ENCODE measurements at regions of chr4 and their contacts with region 1.

Region 1: GRCh38 chr4:173013232-173013930 is 155.2 kb upstream of the GALNT7 start:
- DNase-seq: peak; percentile 58
- H3K4me3 ChIP-seq: no peak overlapping the region; a peak in 1 of 4 replicates
- H3K27ac ChIP-seq: peak overlapping the region in 1 of 2 experiments; percentile 34; a peak in 2 of 4 replicates
- H3K4me1 ChIP-seq: peaks cover 0 to 16% of the 10 kb centered on the region in 2 experiments; a peak in 1 of 4 replicates
- H3K27me3 ChIP-seq: no peaks in the 10 kb centered on the region
- CTCF ChIP-seq: peak; percentile 77
- EP300 ChIP-seq: no peak
- RAD21 ChIP-seq: peak; percentile 81

Region 2: DNA sequence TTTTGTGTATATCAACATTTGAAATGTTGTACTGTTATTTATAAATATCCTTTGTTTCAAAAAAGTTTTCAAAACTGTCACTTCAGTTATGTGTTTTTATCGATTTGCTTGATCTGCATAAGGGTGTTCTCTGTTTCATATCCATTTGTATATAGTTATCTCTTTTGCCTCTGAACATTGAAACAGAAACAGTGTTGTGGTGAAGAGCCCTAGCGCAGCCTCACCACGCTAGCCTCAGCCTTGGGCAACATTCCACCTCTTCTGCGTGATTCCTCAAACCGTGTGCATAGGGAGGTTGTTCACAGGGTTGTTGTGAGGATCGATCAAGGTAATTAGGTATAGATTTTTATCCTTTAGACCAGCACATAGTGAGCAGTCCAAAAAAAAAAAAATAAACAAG is 131.7 kb before region 1 on chr4:
- CTCF ChIA-PET with region 1: no interaction called
- POLR2A ChIA-PET with region 1: no interaction called
- DNase-seq: no peak
- H3K4me3 ChIP-seq: no peak overlapping the region
- H3K27ac ChIP-seq: no peak overlapping the region
- H3K4me1 ChIP-seq: no peaks in the 10 kb centered on the region
- H3K27me3 ChIP-seq: no peaks in the 10 kb centered on the region
- CTCF ChIP-seq: no peak
- EP300 ChIP-seq: no peak
- RAD21 ChIP-seq: no peak

Region 3: GRCh38 chr4:172919269-172919668 is 94.1 kb before region 1 on chr4:
- CTCF ChIA-PET with region 1: no interaction called
- POLR2A ChIA-PET with region 1: no interaction called
- DNase-seq: no peak
- H3K4me3 ChIP-seq: no peak overlapping the region
- H3K27ac ChIP-seq: no peak overlapping the region
- H3K4me1 ChIP-seq: no peaks in the 10 kb centered on the region
- H3K27me3 ChIP-seq: peaks cover 8% of the 10 kb centered on the region; the same call in 1 of the 2 replicates
- CTCF ChIP-seq: no peak
- EP300 ChIP-seq: no peak
- RAD21 ChIP-seq: no peak

Region 4: DNA sequence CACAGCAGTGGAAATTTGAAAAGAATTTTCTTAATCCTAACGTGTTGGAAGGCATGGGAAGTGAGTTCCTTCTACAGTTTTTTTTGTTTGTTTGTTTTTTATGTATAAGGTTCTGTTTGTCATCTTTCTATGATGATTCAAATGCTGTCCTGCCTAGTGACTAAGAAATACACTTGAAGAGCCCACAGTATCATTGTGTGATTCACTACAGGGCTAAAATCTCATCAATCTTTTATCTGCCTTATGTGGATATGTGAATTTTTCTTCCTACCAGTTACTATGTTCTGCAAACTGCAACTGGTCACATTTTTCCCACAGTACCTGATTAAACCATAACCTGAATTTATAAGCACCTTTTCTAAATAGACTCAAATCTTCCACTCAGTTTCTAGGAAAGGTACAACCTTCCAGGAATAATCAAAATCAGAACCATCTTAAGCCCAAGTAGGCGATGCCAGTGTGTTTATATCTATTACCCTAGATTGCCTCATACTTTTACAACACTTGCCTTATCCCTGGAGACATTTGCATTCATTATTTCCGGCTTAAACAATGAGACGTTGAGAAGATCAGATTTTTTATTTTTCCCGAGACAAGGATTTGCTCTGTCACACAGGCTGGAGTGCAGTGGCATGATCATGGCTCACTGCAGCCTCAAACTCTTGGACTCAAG is 59.3 kb before region 1 on chr4:
- CTCF ChIA-PET with region 1: no interaction called
- POLR2A ChIA-PET with region 1: no interaction called
- DNase-seq: no peak
- H3K4me3 ChIP-seq: no peak overlapping the region
- H3K27ac ChIP-seq: no peak overlapping the region
- H3K4me1 ChIP-seq: no peaks in the 10 kb centered on the region; a peak in 1 of 4 replicates
- H3K27me3 ChIP-seq: peaks cover 9% of the 10 kb centered on the region; the same call in 1 of the 2 replicates
- CTCF ChIP-seq: no peak
- EP300 ChIP-seq: no peak
- RAD21 ChIP-seq: no peak

Region 5: DNA sequence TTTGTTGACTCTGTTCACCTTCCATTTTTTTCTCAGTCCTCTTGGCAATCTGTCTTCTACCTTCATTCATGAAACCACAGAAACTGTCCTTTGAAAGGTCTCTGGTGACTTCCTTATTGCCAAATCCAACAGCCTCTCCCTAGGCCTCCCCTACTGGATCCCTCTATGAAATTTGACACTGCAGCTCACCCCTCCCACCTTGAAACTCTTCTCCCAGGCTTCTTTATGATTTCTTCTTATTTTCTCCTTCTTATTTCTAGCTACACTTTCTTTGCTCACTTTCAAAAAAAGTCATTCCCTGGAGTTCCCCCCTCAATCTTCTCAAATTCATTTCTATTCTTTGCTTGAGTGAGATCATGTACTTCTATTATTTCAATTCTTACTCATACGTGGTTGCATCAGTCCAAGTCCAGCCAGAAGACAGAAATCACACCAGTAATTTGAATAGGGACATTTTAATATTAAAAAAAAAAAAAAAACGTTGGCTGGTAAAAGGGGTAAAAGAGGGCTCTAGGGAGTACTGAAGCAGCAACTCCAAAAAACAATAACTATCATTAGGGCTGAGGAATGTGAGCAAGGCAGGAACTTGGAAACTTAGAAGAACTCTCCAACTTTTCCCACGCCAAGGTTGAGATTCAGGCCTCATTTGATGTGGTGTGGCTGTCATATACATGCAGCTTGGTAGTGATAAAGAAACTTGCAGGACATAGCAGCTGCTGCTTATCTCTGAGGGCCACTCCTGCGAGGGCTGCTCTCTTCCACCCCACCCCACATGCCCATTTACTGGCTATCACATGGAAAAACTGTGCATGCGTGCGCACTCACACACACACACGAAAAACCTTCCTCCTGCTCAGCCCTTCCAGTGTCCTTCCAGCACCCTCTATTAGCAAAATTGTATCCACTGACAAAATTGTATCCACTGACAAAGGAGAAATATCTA is 14.6 kb before region 1 on chr4:
- CTCF ChIA-PET with region 1: interaction called, 20 read pairs
- POLR2A ChIA-PET with region 1: no interaction called
- DNase-seq: no peak
- H3K4me3 ChIP-seq: no peak overlapping the region
- H3K27ac ChIP-seq: peak overlapping the region in 1 of 2 experiments; percentile 82; a peak in 2 of 4 replicates
- H3K4me1 ChIP-seq: peaks cover 0 to 23% of the 10 kb centered on the region in 2 experiments; a peak in 1 of 4 replicates
- H3K27me3 ChIP-seq: no peaks in the 10 kb centered on the region
- CTCF ChIP-seq: no peak
- EP300 ChIP-seq: no peak
- RAD21 ChIP-seq: no peak

Region 6: GRCh38 chr4:173025131-173025530 is 11.8 kb after region 1 on chr4:
- CTCF ChIA-PET with region 1: interaction called, 49 read pairs
- POLR2A ChIA-PET with region 1: no interaction called
- DNase-seq: peak; percentile 60
- H3K4me3 ChIP-seq: no peak overlapping the region
- H3K27ac ChIP-seq: no peak overlapping the region
- H3K4me1 ChIP-seq: peaks cover 4 to 12% of the 10 kb centered on the region in 2 experiments; a peak in 3 of 4 replicates
- H3K27me3 ChIP-seq: no peaks in the 10 kb centered on the region
- CTCF ChIP-seq: peak; percentile 80
- EP300 ChIP-seq: no peak
- RAD21 ChIP-seq: peak; percentile 88

Region 7: GRCh38 chr4:173264684-173265185 is 251.4 kb after region 1 on chr4:
- CTCF ChIA-PET with region 1: interaction called, 16 read pairs
- POLR2A ChIA-PET with region 1: no interaction called
- DNase-seq: peak; percentile 36
- H3K4me3 ChIP-seq: no peak overlapping the region; a peak in 1 of 4 replicates
- H3K27ac ChIP-seq: peak overlapping the region in 1 of 2 experiments; percentile 77; a peak in 2 of 4 replicates
- H3K4me1 ChIP-seq: peaks cover 8 to 23% of the 10 kb centered on the region in 2 experiments; a peak in 3 of 4 replicates
- H3K27me3 ChIP-seq: no peaks in the 10 kb centered on the region
- CTCF ChIP-seq: no peak
- EP300 ChIP-seq: no peak
- RAD21 ChIP-seq: no peak

Region 8: GRCh38 chr4:173318648-173319211 is 305.3 kb after region 1 on chr4:
- CTCF ChIA-PET with region 1: interaction called, 12 read pairs
- POLR2A ChIA-PET with region 1: no interaction called
- DNase-seq: peak; percentile 18
- H3K4me3 ChIP-seq: no peak overlapping the region
- H3K27ac ChIP-seq: peak overlapping the region in 1 of 2 experiments; percentile 37; a peak in 3 of 4 replicates
- H3K4me1 ChIP-seq: peaks cover 0 to 21% of the 10 kb centered on the region in 2 experiments; a peak in 3 of 4 replicates
- H3K27me3 ChIP-seq: no peaks in the 10 kb centered on the region
- CTCF ChIP-seq: peak; percentile 50
- EP300 ChIP-seq: no peak
- RAD21 ChIP-seq: peak; percentile 68

Measured in SK-N-SH (cell line).